ENCODE measurements at regions of chr12 and their contacts with region 1.

Region 1: DNA sequence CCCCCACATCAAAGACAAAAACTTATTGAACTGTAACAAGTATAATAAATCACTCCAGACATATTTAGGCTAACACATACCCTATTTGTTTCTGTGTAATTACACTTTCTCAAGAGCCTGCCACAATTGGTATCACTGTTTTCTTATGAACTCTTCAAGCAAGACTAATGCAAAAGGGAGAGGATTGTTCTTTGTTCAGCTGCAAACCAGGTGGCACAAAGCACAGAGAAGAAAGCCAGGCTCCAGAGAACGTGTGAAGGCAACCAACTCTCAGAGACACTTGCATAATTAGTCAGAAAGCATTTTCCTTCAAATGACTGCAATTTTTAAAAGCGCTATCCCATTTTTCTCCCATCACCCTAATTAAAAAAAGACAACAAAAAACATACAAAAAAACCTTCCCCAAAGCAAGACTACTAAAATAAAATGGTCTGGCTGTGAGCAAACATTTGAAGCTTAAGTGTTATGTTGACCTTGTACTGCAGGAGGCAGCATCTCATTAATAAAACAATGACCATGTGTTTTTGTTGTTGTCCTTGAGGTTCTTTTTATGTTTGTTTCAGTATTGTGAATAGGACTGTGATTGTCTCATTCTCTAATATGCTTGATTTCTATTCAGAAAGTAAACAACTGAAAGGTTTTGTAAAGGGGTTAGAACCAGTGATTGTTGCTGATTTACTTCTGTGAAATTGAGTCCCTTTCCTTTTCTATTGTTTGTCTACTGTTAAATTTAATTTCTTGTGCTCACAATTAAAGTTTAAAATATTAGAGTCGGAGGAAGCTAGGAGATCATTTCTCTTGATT is 452.7 kb upstream of the PDE3A start:
- DNase-seq: no peak
- H3K4me3 ChIP-seq: no peak overlapping the region
- CTCF ChIP-seq: no peak
- POLR2A ChIP-seq: no peak

Region 2: DNA sequence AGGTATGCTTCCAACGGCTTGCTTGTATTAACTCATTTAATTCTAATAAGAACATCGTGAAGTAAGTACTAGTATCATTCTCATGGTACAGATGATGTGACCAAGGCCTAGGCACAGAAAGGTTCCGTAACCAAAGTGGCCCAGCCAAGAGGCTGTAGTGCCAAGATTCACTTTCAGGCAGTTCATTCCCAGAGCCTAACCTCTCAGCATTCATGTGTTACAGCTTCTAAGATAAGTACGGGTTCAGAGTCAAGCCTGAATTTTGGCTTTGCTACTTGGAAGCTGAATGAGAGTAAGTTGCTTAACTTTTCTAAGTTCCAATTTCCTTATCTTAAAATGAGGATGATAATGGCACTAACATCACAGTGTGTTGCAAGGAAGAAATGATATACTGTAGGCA is 96.4 kb before region 1 on chr12:
- intact Hi-C with region 1: no loop called
- DNase-seq: no peak
- H3K4me3 ChIP-seq: no peak overlapping the region
- CTCF ChIP-seq: no peak
- POLR2A ChIP-seq: no peak

Region 3: DNA sequence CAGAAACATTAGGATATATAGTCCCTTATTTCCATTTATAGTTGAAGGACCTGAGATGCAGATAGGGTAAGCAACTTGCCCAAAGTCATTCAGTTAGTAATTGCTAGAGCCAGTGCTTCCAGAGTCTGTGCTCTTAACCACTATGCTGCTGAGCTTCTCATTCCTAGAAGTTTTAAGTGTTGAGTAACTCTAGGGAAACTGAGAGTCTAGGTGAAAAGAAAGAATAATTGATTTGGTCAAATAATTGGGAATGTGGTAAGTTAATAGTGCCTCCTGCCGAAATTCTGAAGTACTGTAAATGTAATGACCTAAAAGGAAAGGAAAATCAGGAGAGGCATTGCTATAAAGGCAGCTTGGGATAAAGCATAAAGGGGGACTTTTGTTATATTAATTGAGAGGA is 1535.9 kb after region 1 on chr12:
- intact Hi-C with region 1: loop called (anchors 5 kb)
- DNase-seq: no peak
- H3K4me3 ChIP-seq: no peak overlapping the region
- CTCF ChIP-seq: no peak
- POLR2A ChIP-seq: no peak